RWPE1 (cell line): ENCODE measurements at regions of chr18 and their contacts with region 1.

Region 1: DNA sequence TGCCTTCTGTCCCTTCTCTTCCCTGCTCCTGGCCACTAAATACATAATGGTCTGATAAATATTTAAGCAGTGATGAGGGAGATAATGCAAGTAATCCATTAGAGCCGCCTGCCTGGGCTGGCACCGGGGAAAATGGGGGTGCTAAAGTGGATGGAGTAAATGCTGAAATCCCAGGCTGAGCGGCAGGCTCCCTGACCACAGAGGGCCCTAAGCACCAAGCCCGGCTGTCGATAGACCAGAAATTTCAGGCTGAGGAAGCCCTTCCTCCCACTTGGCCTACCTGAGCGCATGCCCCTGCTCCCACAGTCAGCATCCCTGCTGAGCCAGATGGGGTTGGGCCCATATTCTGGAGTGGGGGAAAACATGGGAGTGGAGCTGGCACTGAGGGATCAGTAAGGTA is 197.5 kb upstream of the SKOR2 start:
- DNase-seq: no peak
- H3K27ac ChIP-seq: no peak overlapping the region
- CTCF ChIP-seq: no peak

Region 2: GRCh38 chr18:47370052-47370451 is 78.9 kb before region 1 on chr18:
- CTCF ChIA-PET with region 1: interaction called, 10 read pairs
- POLR2A ChIA-PET with region 1: no interaction called
- DNase-seq: no peak
- H3K27ac ChIP-seq: no peak overlapping the region
- CTCF ChIP-seq: no peak

Region 3: GRCh38 chr18:47501946-47502345 is 53.0 kb after region 1 on chr18:
- CTCF ChIA-PET with region 1: no interaction called
- POLR2A ChIA-PET with region 1: no interaction called
- DNase-seq: no peak
- H3K27ac ChIP-seq: no peak overlapping the region
- CTCF ChIP-seq: no peak